Activated B cell treated with CpG ODN at 0.5 μM for 24 hours (primary cell): ENCODE measurements at regions of chr7 and their contacts with region 1.

Region 1: DNA sequence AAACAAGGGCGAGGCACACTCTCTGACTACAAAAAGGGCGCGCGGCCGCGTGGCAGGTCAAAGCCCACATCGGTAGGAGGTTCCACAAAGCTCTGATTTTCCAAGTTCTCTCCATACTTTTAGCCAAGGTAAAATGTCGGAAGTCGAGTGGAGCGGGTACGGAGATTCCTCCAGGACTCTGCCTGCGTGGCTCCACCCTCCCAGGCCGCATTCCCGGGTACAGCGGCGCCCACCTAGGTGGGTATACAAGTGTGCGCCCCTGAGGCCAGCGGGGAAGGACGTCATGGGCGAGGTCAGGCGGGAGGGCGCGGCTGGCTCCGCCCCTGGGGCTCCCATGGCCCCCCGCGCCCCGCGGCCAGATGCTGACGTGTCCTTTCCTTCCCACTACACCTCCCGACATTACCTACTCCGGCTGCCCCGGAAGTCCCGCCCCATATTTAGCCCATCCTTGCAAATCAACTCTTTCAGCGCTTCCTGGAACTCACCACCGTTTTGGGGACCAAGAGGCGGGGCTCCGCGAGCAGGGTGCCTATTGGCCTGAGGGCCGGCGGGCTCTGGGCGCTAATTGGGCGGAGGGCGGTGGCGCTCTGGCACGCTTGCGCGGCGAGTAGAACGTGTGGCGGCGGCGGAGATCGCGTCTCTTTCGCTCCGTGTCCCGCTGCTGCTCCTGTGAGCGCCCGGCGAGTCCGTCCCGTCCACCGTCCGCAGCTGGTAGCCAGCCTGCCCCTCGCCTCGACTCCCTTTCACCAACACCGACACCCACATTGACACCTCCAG is at the start of gene SND1:
- DNase-seq: peak; percentile 93
- ATAC-seq: peak; percentile 92
- H3K4me3 Mint-ChIP-seq: no peak within 1 kb of the TSS
- H3K27ac Mint-ChIP-seq: peak within 1 kb of the TSS; percentile 97
- H3K4me1 Mint-ChIP-seq: peaks cover 49% of the 10 kb centered on the region
- H3K27me3 Mint-ChIP-seq: no peaks in the 10 kb centered on the region
- CTCF ChIP-seq: no peak
- total RNA-seq, gene SND1: 204 and 215 TPM in 2 replicates

Region 2: DNA sequence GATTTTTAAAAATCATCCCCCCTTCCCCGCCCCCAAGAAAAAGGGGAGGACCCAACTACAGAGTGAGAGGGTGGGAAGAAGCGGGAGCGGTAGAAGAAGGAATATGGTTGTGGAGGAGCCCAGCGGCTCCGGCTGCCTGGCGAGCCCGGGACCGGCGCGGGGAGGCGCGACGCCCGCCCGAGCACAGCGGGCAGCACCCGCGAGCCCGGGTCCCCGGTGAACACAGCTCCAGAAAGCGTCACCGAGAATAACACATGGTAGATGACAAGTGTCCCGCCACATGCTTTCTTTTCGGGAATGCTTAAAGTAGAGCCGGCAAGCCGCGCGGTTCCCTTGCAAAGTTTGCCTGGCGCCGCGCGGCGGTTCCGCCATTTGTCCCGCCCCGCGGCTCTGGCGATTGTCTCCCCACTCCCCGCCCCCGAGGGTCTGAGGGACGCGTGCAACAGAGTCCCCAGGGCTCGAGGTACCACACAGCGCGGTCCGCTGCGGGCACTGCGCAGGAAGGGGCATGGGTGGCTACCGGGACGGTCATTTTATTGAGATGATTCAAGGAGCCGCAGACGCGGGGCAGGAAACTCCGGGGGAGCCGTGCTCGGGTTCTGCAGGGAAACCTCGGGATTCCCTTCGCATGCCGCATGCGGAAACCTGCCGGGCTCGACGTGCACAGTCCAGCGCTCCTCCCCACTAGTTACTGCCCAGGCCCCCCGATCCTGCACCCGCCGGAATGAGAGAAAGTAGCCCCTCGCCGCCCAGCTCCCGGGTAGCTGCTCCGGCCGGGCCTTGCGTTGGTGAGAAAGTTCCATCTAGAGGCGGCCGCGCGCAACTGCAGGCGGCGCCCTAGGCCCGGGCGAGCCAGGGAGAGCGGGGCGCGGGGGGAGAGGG is 398.2 kb before region 1 on chr7:
- CTCF ChIA-PET with region 1: no interaction called
- POLR2A ChIA-PET with region 1: no interaction called
- intact Hi-C with region 1: loop called (anchors 5 kb)
- DNase-seq: peak; percentile 58
- ATAC-seq: peak; percentile 88
- H3K4me3 Mint-ChIP-seq: peak overlapping the region; percentile 88
- H3K27ac Mint-ChIP-seq: no peak overlapping the region
- H3K4me1 Mint-ChIP-seq: peaks cover 25% of the 10 kb centered on the region
- H3K27me3 Mint-ChIP-seq: peaks cover 67% of the 10 kb centered on the region
- CTCF ChIP-seq: peak; percentile 54

Region 3: DNA sequence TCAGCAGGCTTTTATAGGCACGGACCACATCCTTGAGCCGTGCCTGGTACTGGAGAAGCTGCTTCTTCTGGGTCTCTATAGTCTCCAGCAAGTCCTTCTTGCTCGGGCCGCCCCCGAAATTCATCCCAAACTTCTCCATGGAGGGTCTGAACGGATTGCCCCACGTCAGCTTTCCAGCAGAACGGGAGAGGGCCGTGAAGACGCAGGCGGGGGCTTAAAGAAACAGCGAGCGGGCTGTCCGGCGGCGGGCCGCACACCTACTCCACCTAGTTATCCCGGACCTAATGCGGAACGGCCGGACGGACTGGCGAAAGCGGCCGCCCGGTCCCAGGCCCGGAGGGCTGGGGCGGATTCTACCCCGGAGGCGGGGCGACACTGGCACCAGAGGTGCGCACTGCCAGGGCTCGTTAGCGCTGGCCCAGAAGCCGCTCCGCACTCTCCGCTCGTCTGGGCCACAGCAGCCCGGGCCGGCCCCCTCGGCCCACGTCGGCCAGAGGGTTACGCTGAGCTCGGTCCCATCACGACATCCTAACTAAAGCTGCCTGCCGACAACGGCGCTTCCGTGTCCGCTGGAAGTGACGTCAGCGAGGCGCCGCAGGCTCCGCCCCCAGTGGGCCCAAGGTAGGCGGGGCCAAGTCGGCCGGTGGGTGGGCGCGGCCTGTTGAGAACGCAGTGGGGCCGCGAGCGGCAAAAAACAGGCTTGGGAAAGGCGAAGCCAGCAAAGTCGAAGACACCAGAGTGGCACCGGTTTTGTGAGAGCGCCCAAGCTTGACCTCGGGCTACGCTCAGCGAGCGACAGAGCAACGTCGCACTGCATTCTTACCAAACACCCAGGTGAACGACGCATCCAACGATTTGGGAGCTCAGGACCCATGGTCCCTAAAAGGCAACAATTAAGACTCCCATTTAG is 66.4 kb before region 1 on chr7 and contains the start of gene GCC1:
- CTCF ChIA-PET with region 1: no interaction called
- POLR2A ChIA-PET with region 1: interaction called, 10 read pairs
- intact Hi-C with region 1: loop called (anchors 1 kb)
- DNase-seq: peak; percentile 98
- ATAC-seq: peak; percentile 78
- H3K4me3 Mint-ChIP-seq: peak within 1 kb of the TSS; percentile 89
- H3K27ac Mint-ChIP-seq: peak within 1 kb of the TSS; percentile 79
- H3K4me1 Mint-ChIP-seq: peaks cover 76% of the 10 kb centered on the region
- H3K27me3 Mint-ChIP-seq: no peaks in the 10 kb centered on the region
- CTCF ChIP-seq: no peak
- total RNA-seq, gene GCC1: 22.5 and 23.3 TPM in 2 replicates

Region 4: DNA sequence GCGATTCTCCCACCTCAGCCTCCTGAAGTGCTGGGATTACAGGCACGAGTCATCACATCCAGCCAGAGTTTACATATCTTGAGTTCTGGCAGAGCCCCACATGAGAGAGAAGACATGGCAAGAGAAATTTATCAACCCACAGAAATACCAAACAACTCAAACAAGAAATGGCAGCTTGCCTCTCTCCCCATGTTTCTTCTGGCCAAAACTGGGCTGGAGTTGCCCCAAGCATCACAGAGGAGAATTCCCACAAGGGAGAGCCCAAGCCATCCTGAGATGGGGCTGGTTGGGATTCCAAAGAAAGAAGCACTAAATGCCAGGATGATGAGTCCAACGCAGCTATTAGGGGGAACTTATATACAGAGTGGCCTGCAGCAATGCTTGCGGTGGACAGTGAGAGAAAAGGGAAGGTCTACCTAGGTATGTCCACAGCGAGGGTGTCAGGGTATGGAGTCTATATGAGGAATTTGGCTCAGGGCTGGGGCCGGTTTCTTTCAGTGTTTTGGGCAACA is 19.4 kb before region 1 on chr7:
- CTCF ChIA-PET with region 1: no interaction called
- POLR2A ChIA-PET with region 1: no interaction called
- intact Hi-C with region 1: no loop called
- DNase-seq: no peak
- ATAC-seq: no peak
- H3K4me3 Mint-ChIP-seq: no peak overlapping the region
- H3K27ac Mint-ChIP-seq: no peak overlapping the region
- H3K4me1 Mint-ChIP-seq: no peaks in the 10 kb centered on the region
- H3K27me3 Mint-ChIP-seq: peaks cover 36% of the 10 kb centered on the region
- CTCF ChIP-seq: no peak

Region 5: GRCh38 chr7:127683776-127684681 is 32.3 kb after region 1 on chr7:
- CTCF ChIA-PET with region 1: no interaction called
- POLR2A ChIA-PET with region 1: no interaction called
- intact Hi-C with region 1: loop called (anchors 1 kb)
- DNase-seq: no peak
- ATAC-seq: peak; percentile 18
- H3K4me3 Mint-ChIP-seq: no peak overlapping the region
- H3K27ac Mint-ChIP-seq: no peak overlapping the region
- H3K4me1 Mint-ChIP-seq: peaks cover 42% of the 10 kb centered on the region
- H3K27me3 Mint-ChIP-seq: no peaks in the 10 kb centered on the region
- CTCF ChIP-seq: no peak

Region 6: DNA sequence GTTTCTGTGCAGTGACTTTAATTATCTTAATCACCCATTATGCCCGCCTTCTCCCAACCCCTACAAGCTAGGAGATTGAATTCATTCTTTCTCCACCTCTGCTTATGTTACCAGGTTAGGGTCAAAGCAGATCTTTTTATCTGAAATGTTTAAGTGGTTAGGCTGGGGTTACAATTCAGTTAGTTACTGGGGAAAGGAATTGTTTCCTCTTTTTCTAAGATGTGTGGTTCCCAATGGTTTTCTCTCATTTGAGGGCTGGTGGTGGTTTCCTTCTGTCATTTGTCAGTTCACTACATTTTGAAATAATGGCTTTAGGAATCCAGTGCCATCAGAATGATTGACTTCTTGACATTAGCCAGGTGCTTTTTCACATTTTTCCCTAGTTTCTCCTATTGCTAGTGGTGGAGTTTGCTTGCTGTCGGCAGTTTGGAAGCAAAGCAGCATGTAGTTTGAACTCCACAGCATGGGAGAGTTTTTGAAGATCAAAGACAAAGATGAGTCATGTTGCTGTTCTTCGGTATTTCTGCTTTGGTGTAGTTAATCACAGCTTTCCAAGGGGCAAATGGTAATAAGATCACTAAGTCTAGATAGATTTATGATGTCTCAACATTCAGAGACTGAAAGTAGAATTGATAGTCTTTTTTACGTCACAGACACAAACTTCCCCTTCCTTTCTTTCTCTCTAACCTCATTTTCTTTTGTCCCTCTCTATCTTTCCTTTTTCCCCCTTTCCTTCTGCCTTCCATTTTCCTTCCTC is 168.4 kb after region 1 on chr7:
- CTCF ChIA-PET with region 1: no interaction called
- POLR2A ChIA-PET with region 1: no interaction called
- intact Hi-C with region 1: no loop called
- DNase-seq: no peak
- ATAC-seq: peak; percentile 31
- H3K4me3 Mint-ChIP-seq: peak overlapping the region; percentile 38
- H3K27ac Mint-ChIP-seq: peak overlapping the region; percentile 78
- H3K4me1 Mint-ChIP-seq: peaks cover 40% of the 10 kb centered on the region
- H3K27me3 Mint-ChIP-seq: no peaks in the 10 kb centered on the region
- CTCF ChIP-seq: no peak

Region 7: DNA sequence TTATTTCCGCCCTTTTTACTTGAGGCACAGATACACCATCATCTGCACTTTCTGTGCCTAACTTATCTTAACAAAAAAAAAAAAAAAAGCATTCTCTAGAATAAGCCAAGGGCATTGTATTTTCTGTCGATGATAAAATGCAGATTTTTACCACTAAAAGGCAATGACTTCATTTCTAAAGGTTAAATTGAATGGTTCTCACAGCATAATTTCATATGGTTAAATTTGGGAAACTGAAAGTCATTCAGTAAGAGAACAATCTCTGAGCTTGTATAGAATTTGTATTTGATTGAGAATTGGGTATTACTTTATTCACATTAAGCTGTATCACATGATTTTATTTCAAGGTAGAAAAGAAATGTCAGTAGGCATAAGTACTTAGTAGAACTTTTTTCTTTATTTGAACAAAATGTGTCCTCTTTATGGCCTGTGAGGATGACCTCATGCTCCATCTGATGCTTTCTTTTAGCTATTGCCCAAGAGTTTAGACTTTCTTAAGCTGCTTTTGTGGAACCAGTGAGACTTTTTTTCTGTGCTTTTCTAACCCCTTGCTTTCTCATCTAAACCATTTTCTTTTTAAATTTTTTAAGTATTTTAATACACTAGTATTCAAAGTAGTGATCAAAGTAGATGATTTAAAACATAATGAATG is 269.2 kb after region 1 on chr7:
- CTCF ChIA-PET with region 1: no interaction called
- POLR2A ChIA-PET with region 1: no interaction called
- intact Hi-C with region 1: no loop called
- DNase-seq: no peak
- ATAC-seq: no peak
- H3K4me3 Mint-ChIP-seq: no peak overlapping the region
- H3K27ac Mint-ChIP-seq: no peak overlapping the region
- H3K4me1 Mint-ChIP-seq: peaks cover 13% of the 10 kb centered on the region
- H3K27me3 Mint-ChIP-seq: no peaks in the 10 kb centered on the region
- CTCF ChIP-seq: no peak